Naive thymus-derived CD4-positive, alpha-beta T cell (primary cell): ENCODE measurements at regions of chr12 and their contacts with region 1.

Region 1: DNA sequence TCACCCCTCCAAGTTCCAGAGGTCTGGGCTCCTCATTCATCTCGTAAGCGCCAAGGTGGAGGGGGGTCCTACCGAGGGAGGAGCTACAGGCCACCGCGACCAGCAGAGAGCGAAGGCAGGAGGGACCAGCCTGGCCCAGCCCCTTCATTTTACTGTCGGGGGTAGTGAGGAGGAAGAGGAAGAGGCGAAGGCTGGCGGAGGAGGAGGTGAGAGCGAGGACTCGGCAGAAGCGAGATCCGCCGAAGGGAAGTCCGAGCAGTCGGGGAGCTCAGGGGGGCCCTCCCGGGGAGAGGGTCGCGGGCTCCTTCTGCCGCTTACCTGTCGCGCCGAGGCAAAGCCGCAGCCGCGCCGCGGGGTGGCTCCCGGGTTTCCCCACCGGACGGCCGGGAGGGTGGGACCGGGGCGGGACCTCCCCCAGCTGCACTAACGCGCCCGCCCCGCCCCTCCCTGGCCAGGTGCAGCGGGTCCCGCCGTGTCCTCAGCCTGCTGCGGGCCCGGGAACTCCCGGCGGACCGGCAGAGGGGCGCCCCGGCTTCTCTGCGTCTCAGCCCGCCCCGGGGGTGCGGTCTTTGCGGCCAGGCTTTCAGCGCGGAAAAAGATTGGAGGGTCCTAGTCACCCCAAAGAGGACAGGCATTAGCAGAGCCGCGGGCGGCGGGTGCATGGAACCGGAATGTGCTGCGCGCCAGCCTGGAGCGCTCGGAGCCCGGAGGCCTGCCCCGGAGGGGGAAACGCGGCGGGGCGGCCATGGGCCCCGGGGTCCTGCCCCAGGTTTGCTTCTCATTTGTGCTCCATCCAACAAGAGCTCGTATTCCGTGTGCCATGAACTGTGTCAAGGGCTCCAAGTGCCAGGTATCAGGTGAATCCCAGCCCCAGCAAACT is at the start of gene GALNT6:
- DNase-seq: peak; percentile 50 to 74 (median 61)
- ATAC-seq: peak; percentile 76
- H3K4me3 ChIP-seq: peak within 1 kb of the TSS; percentile 67
- H3K4me3 Mint-ChIP-seq: peak within 1 kb of the TSS; percentile 77 to 96 (median 92)
- H3K27ac ChIP-seq: peak within 1 kb of the TSS; percentile 83
- H3K27ac Mint-ChIP-seq: peak within 1 kb of the TSS; percentile 84 to 96 (median 90)
- H3K4me1 ChIP-seq: peaks cover 50 to 68% of the 10 kb centered on the region in 2 donors
- H3K4me1 Mint-ChIP-seq: peaks cover 67 to 87% (median 74%) of the 10 kb centered on the region in 7 donors
- H3K27me3 ChIP-seq: no peaks in the 10 kb centered on the region
- H3K27me3 Mint-ChIP-seq: peaks cover 0 to 8% (median 0%) of the 10 kb centered on the region in 5 donors
- total RNA-seq, gene GALNT6: 2.5 to 19.5 (median 13.4) TPM

Region 2: DNA sequence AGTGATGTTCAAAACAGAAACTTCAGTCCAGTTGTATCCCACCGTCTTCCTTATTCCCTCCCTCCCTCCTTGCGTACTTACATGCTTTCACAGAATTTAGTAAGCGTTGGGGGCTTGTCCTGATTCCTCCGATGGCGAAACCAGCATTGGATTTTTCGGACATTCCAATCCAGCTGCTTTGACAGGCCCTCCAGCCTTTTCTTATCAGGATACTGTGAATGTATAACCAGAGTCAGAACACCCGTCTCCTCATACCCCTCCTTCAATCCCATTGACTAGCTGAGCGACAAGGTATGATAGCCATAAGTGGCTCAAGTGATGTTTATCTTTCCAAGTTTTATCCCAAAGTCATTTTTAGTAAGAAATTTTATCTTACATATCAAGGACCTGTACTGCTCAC is 1248.5 kb before region 1 on chr12:
- CTCF ChIA-PET with region 1: no interaction called
- POLR2A ChIA-PET with region 1: no interaction called
- intact Hi-C with region 1: no loop called
- DNase-seq: no peak
- ATAC-seq: no peak
- H3K4me3 ChIP-seq: no peak overlapping the region
- H3K4me3 Mint-ChIP-seq: no peak overlapping the region
- H3K27ac ChIP-seq: no peak overlapping the region
- H3K27ac Mint-ChIP-seq: no peak overlapping the region
- H3K4me1 ChIP-seq: no peaks in the 10 kb centered on the region
- H3K4me1 Mint-ChIP-seq: peaks cover 0 to 8% (median 4%) of the 10 kb centered on the region in 7 donors
- H3K27me3 ChIP-seq: no peaks in the 10 kb centered on the region
- H3K27me3 Mint-ChIP-seq: no peaks in the 10 kb centered on the region

Region 3: GRCh38 chr12:51341259-51342007 is 50.1 kb before region 1 on chr12:
- CTCF ChIA-PET with region 1: no interaction called
- POLR2A ChIA-PET with region 1: no interaction called
- intact Hi-C with region 1: no loop called
- DNase-seq: peak; percentile 36 to 79 (median 69)
- ATAC-seq: peak; percentile 96
- H3K4me3 ChIP-seq: peak overlapping the region; percentile 6
- H3K4me3 Mint-ChIP-seq: peak overlapping the region; percentile 41 to 84 (median 65)
- H3K27ac ChIP-seq: peak overlapping the region; percentile 39
- H3K27ac Mint-ChIP-seq: peak overlapping the region; percentile 38 to 92 (median 84)
- H3K4me1 ChIP-seq: peaks cover 4 to 8% of the 10 kb centered on the region in 2 donors
- H3K4me1 Mint-ChIP-seq: peaks cover 14 to 26% (median 16%) of the 10 kb centered on the region in 7 donors
- H3K27me3 ChIP-seq: no peaks in the 10 kb centered on the region
- H3K27me3 Mint-ChIP-seq: no peaks in the 10 kb centered on the region

Region 4: GRCh38 chr12:51368640-51369517 is 22.6 kb before region 1 on chr12:
- CTCF ChIA-PET with region 1: interaction called, 6 read pairs
- POLR2A ChIA-PET with region 1: interaction called, 13 read pairs
- intact Hi-C with region 1: loop called (anchors 1 kb)
- DNase-seq: peak; percentile 53 to 96 (median 95)
- ATAC-seq: peak; percentile 96
- H3K4me3 ChIP-seq: peak overlapping the region; percentile 57
- H3K4me3 Mint-ChIP-seq: peak overlapping the region; percentile 62 to 89 (median 80)
- H3K27ac ChIP-seq: peak overlapping the region; percentile 73
- H3K27ac Mint-ChIP-seq: peak overlapping the region; percentile 6 to 96 (median 91)
- H3K4me1 ChIP-seq: peaks cover 24 to 35% of the 10 kb centered on the region in 2 donors
- H3K4me1 Mint-ChIP-seq: peaks cover 38 to 72% (median 54%) of the 10 kb centered on the region in 7 donors
- H3K27me3 ChIP-seq: no peaks in the 10 kb centered on the region
- H3K27me3 Mint-ChIP-seq: peaks cover 0 to 5% (median 0%) of the 10 kb centered on the region in 5 donors

Region 5: DNA sequence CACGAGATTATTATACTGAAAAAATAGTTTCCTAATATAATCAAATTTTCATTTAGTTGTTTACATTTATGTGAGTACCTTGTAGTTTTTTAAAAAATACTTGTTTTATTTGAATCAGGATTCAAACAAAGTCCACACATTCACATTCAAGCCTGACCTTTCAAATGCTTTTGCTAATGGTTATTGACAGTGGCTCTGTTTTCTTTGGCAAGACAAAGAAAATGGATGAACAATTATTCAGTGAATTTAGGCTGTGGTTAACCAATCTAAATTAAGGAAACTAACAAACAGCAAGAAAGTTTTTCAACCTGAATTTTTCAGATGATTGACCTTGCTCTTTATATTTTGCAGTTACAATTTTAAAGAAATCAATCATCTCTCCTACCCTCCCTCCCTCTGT is 42.8 kb after region 1 on chr12:
- CTCF ChIA-PET with region 1: no interaction called
- POLR2A ChIA-PET with region 1: no interaction called
- intact Hi-C with region 1: no loop called
- DNase-seq: no peak
- ATAC-seq: no peak
- H3K4me3 ChIP-seq: no peak overlapping the region
- H3K4me3 Mint-ChIP-seq: no peak overlapping the region
- H3K27ac ChIP-seq: no peak overlapping the region
- H3K27ac Mint-ChIP-seq: no peak overlapping the region
- H3K4me1 ChIP-seq: peaks cover 0 to 5% of the 10 kb centered on the region in 2 donors
- H3K4me1 Mint-ChIP-seq: peaks cover 1 to 33% (median 10%) of the 10 kb centered on the region in 7 donors
- H3K27me3 ChIP-seq: no peaks in the 10 kb centered on the region
- H3K27me3 Mint-ChIP-seq: peaks cover 0 to 29% (median 0%) of the 10 kb centered on the region in 5 donors

Region 6: DNA sequence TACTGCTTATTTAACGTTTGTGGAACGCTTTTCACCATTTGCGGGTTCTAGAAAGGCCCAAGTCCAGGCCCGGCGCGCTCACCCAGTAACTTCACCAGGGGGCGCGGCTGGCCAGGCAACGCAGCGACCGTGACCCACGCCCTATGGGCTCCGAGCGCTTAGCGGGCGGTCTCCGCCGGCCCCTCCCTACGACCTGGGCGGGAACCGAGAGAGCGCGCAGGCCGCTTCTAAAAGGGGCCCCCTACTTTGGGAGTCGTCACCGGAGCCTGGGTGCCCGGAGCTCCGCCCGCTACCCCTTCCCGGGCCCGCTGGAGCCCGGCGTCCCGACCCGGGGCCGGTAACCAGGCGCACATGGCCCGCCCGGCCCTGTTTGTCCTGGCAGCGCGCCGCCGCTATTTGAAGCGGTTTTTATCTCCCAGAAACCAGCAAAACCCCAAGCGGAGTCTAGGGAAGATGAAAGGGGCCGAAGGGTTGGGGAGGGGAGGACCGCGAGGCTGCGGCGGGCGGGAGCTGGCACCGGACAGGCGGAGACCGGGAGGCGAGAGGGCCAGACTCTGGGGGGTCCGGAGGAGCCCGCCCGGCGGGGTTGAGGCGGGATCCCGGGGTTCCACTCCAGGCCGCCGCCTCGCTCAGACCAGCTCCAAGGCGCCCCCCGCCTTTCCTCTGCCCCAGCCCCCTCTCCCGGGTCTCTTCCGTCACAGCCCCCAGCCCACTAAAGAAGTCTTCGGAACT is 1933.4 kb after region 1 on chr12:
- CTCF ChIA-PET with region 1: no interaction called
- POLR2A ChIA-PET with region 1: no interaction called
- intact Hi-C with region 1: no loop called
- DNase-seq: peak; percentile 60 to 91 (median 69)
- ATAC-seq: peak; percentile 71
- H3K4me3 ChIP-seq: peak overlapping the region; percentile 78
- H3K4me3 Mint-ChIP-seq: peak overlapping the region; percentile 87 to 97 (median 95)
- H3K27ac ChIP-seq: peak overlapping the region; percentile 82
- H3K27ac Mint-ChIP-seq: peak overlapping the region; percentile 88 to 98 (median 94)
- H3K4me1 ChIP-seq: peaks cover 25 to 37% of the 10 kb centered on the region in 2 donors
- H3K4me1 Mint-ChIP-seq: peaks cover 24 to 47% (median 43%) of the 10 kb centered on the region in 7 donors
- H3K27me3 ChIP-seq: no peaks in the 10 kb centered on the region
- H3K27me3 Mint-ChIP-seq: peaks cover 0 to 13% (median 0%) of the 10 kb centered on the region in 5 donors